ENCODE measurements at regions of chr9 and their contacts with region 1.

Region 1: GRCh38 chr9:73183917-73184861 is 32.5 kb downstream of the ANXA1 start:
- DNase-seq: peak in 6 of 9 donors; percentile 41 to 70 (median 57)
- ATAC-seq: peak; percentile 50
- H3K4me3 ChIP-seq: no peak overlapping the region
- H3K4me3 Mint-ChIP-seq: no peak overlapping the region
- H3K27ac ChIP-seq: no peak overlapping the region
- H3K27ac Mint-ChIP-seq: no peak overlapping the region
- H3K4me1 ChIP-seq: no peaks in the 10 kb centered on the region
- H3K4me1 Mint-ChIP-seq: peaks cover 0 to 7% (median 0%) of the 10 kb centered on the region in 7 donors
- H3K27me3 ChIP-seq: no peaks in the 10 kb centered on the region
- H3K27me3 Mint-ChIP-seq: peaks cover 17 to 37% (median 25%) of the 10 kb centered on the region in 5 donors

Region 2: DNA sequence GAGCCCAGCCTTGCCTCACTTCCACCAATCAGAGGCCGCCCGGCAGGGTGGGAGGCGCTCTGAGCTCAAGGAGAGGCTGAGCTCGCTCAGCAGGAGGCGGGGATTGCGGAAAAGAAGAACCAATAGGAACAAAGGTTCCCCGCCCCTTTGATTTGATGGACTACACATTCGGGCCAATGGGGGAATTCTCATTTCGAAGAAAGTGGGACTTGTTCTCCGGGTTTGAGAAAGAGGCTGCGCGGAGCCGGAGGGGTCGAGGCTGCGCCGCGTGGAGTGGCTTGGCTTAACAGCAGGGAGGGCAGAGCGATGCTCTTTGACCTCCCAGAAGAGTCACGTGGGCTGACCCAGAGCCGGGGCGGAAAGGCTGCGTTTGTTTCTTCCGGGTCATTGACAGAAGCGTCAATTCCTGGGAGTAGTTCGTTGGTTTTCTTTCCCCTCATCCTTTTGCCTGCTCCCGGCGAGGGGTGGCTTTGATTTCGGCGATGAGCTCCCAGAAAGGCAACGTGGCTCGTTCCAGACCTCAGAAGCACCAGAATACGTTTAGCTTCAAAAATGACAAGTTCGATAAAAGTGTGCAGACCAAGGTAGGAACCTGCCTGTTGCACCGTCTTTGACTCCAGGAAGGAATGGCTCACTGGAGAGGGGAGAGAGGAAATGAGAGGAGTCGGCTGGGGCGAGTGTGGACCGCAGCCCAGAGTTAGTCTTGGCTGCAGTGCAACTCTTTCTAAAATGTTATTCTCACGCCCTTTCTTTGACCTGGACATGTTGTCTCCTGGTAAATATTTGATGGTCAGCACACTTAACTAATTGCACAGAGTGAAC is 1272.7 kb before region 1 on chr9 and contains the start of gene C9orf85:
- CTCF ChIA-PET with region 1: no interaction called
- POLR2A ChIA-PET with region 1: no interaction called
- intact Hi-C with region 1: no loop called
- DNase-seq: peak; percentile 84 to 98 (median 95)
- ATAC-seq: peak; percentile 96
- H3K4me3 ChIP-seq: peak within 1 kb of the TSS; percentile 83
- H3K4me3 Mint-ChIP-seq: peak within 1 kb of the TSS; percentile 95 to 100 (median 100)
- H3K27ac ChIP-seq: peak within 1 kb of the TSS; percentile 74
- H3K27ac Mint-ChIP-seq: peak within 1 kb of the TSS; percentile 90 to 99 (median 95)
- H3K4me1 ChIP-seq: peaks cover 15 to 22% of the 10 kb centered on the region in 2 donors
- H3K4me1 Mint-ChIP-seq: peaks cover 47 to 80% (median 67%) of the 10 kb centered on the region in 7 donors
- H3K27me3 ChIP-seq: peaks cover 0 to 3% of the 10 kb centered on the region in 2 donors
- H3K27me3 Mint-ChIP-seq: no peaks in the 10 kb centered on the region
- total RNA-seq, gene C9orf85: 4.8 to 10.3 (median 8.6) TPM

Region 3: GRCh38 chr9:72592502-72593403 is 591.4 kb before region 1 on chr9:
- CTCF ChIA-PET with region 1: no interaction called
- POLR2A ChIA-PET with region 1: no interaction called
- intact Hi-C with region 1: loop called in 1 of 2 experiments (anchors 10 kb)
- DNase-seq: peak in 7 of 9 donors; percentile 11 to 60 (median 47)
- ATAC-seq: peak; percentile 80
- H3K4me3 ChIP-seq: no peak overlapping the region
- H3K4me3 Mint-ChIP-seq: no peak overlapping the region
- H3K27ac ChIP-seq: no peak overlapping the region
- H3K27ac Mint-ChIP-seq: no peak overlapping the region
- H3K4me1 ChIP-seq: no peaks in the 10 kb centered on the region
- H3K4me1 Mint-ChIP-seq: peaks cover 0 to 50% (median 6%) of the 10 kb centered on the region in 7 donors
- H3K27me3 ChIP-seq: no peaks in the 10 kb centered on the region
- H3K27me3 Mint-ChIP-seq: peaks cover 0 to 5% (median 2%) of the 10 kb centered on the region in 5 donors

Region 4: DNA sequence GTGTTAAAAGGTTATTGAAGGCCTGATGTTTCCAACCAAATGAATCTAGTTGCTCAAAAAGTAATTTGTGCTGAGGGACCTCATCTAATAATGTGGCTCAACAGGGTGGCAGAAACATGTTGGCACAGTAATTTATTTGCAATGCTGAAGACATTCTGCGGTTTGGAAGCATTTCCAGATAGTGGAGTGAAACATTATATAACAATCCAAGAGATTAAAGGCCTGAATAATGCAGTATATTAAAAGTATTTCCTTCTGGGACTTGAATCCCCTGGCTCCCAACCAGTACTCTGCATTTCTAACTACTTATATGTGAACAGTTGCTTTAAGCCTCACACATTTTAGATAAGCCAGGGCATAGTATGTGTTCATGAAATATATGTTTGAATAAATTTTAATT is 205.4 kb before region 1 on chr9:
- CTCF ChIA-PET with region 1: no interaction called
- POLR2A ChIA-PET with region 1: no interaction called
- intact Hi-C with region 1: no loop called
- DNase-seq: no peak
- ATAC-seq: no peak
- H3K4me3 ChIP-seq: no peak overlapping the region
- H3K4me3 Mint-ChIP-seq: no peak overlapping the region
- H3K27ac ChIP-seq: no peak overlapping the region
- H3K27ac Mint-ChIP-seq: no peak overlapping the region
- H3K4me1 ChIP-seq: no peaks in the 10 kb centered on the region
- H3K4me1 Mint-ChIP-seq: no peaks in the 10 kb centered on the region
- H3K27me3 ChIP-seq: no peaks in the 10 kb centered on the region
- H3K27me3 Mint-ChIP-seq: peaks cover 2 to 15% (median 6%) of the 10 kb centered on the region in 5 donors

Region 5: DNA sequence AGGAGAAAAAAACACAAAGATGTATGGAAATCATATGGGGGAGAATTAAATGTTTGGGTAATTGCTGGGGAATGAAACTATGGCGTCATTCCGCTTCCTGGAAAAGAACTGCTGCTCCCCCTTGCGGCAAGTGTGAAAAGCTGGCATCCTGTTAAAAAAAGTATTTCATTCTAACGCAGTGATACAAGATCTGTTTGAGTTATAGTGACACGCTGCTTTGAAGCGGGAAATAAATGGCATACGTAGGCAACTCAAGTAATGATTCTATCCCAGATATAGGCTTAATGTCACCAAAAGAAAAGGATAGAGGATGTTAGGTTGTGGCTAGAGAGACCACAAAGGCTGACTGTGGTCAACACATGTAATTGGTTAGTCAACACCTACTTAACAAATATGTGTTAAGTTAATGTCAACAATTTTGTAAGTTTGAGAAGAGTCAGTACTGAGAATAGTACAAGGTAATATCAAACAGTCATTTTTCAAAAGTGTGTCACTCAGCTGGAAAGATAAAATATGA is 161.1 kb before region 1 on chr9:
- CTCF ChIA-PET with region 1: no interaction called
- POLR2A ChIA-PET with region 1: no interaction called
- intact Hi-C with region 1: loop called in 1 of 2 experiments (anchors 5 kb)
- DNase-seq: peak in 5 of 9 donors; percentile 5 to 27 (median 19)
- ATAC-seq: peak; percentile 55
- H3K4me3 ChIP-seq: no peak overlapping the region
- H3K4me3 Mint-ChIP-seq: no peak overlapping the region
- H3K27ac ChIP-seq: no peak overlapping the region
- H3K27ac Mint-ChIP-seq: no peak overlapping the region
- H3K4me1 ChIP-seq: no peaks in the 10 kb centered on the region
- H3K4me1 Mint-ChIP-seq: peaks cover 0 to 10% (median 7%) of the 10 kb centered on the region in 7 donors
- H3K27me3 ChIP-seq: no peaks in the 10 kb centered on the region
- H3K27me3 Mint-ChIP-seq: peaks cover 16 to 36% (median 26%) of the 10 kb centered on the region in 5 donors

Region 6: DNA sequence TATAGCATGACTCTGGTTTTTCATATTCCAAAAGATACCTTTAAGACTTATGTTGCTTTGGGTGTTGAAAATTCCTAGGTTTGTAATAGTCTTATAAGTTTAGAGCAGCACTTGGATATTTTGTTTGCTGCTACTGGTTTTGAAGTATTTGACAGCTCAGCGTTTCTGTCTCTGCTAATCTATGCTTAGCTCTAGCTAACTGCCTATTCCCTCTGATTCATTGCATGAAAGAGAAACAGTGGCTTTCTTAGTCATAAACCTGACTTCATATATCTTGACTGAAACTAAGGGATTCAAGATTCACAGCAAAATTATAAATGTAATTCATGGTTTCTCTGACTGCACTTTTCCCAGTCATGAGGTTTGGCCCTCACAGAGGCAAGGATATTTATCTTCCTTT is 68.2 kb before region 1 on chr9:
- CTCF ChIA-PET with region 1: interaction called, 148 read pairs
- POLR2A ChIA-PET with region 1: interaction called, 4 read pairs
- intact Hi-C with region 1: no loop called
- DNase-seq: no peak
- ATAC-seq: no peak
- H3K4me3 ChIP-seq: no peak overlapping the region
- H3K4me3 Mint-ChIP-seq: no peak overlapping the region
- H3K27ac ChIP-seq: no peak overlapping the region
- H3K27ac Mint-ChIP-seq: no peak overlapping the region
- H3K4me1 ChIP-seq: peaks cover 0 to 19% of the 10 kb centered on the region in 2 donors
- H3K4me1 Mint-ChIP-seq: peaks cover 19 to 48% (median 38%) of the 10 kb centered on the region in 7 donors
- H3K27me3 ChIP-seq: no peaks in the 10 kb centered on the region
- H3K27me3 Mint-ChIP-seq: no peaks in the 10 kb centered on the region

Region 7: GRCh38 chr9:73162987-73163768 is 21.0 kb before region 1 on chr9:
- CTCF ChIA-PET with region 1: interaction called, 3 read pairs
- POLR2A ChIA-PET with region 1: no interaction called
- intact Hi-C with region 1: loop called in 1 of 2 experiments (anchors 2 kb)
- DNase-seq: no peak
- ATAC-seq: peak; percentile 33
- H3K4me3 ChIP-seq: no peak overlapping the region
- H3K4me3 Mint-ChIP-seq: no peak overlapping the region
- H3K27ac ChIP-seq: no peak overlapping the region
- H3K27ac Mint-ChIP-seq: peak overlapping the region in 8 of 9 donors; percentile 21 to 83 (median 70)
- H3K4me1 ChIP-seq: peaks cover 11 to 15% of the 10 kb centered on the region in 2 donors
- H3K4me1 Mint-ChIP-seq: peaks cover 15 to 67% (median 49%) of the 10 kb centered on the region in 7 donors
- H3K27me3 ChIP-seq: no peaks in the 10 kb centered on the region
- H3K27me3 Mint-ChIP-seq: no peaks in the 10 kb centered on the region

Measured in naive thymus-derived CD4-positive, alpha-beta T cell (primary cell).